H1 (cell line): ENCODE measurements at regions of chr7 and their contacts with region 1.

Region 1: DNA sequence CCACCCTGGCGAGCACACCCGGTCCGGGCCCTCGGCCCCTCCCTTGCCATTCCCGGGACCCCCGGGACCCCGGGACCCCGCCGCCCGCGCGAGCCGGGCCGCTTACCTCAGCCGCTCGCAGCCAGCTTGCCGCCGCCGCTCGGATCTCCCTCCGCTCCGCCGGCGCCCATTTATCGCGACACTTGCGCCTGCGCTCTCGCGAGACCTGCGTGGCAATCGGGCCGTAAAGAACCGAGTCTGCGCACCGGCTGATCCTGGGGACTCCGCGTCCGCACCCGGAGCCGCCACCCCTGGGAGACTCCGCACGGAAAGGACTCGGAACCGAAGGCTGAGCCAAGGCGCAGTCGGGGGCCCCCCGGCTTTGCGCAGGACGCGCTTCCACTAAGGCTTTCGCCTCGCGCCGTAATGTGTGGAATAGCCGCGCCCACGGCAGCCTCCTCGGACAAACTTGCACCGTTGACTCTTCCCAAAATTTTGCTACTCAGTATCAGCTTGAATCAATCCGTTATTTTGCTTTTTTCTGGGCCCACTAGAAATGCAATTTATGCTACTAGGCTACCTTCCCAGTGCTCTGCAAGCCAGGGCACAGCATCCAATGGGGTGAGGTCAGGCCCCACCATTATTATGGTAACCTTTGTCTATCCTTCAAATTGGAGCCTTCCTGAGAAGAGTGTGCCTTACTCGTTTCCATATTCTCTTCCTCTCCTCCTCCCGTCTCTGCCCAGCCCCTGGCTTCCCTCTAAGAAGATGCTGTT is at the start of gene MAD1L1:
- DNase-seq: peak in 1 of 2 experiments; percentile 94
- H3K4me3 ChIP-seq: peak within 1 kb of the TSS; percentile 62 to 93 (median 82)
- H3K27ac ChIP-seq: peak within 1 kb of the TSS; percentile 31; the same call in 1 of the 2 replicates
- H3K4me1 ChIP-seq: peaks cover 0 to 2% (median 0%) of the 10 kb centered on the region in 4 experiments; a peak in 1 of 7 replicates
- H3K27me3 ChIP-seq: no peaks in the 10 kb centered on the region
- CTCF ChIP-seq: no peak
- EP300 ChIP-seq: no peak; a peak in 1 of 3 replicates
- POLR2A ChIP-seq: peak in 1 of 2 experiments; percentile 80; a peak in 2 of 3 replicates
- RAD21 ChIP-seq: no peak
- total RNA-seq, gene MAD1L1: 38.8 and 40.4 TPM in 2 replicates

Region 2: GRCh38 chr7:2258661-2259365 is 25.9 kb after region 1 on chr7:
- CTCF ChIA-PET with region 1: interaction called, 4 read pairs
- POLR2A ChIA-PET with region 1: interaction called, 11 read pairs
- DNase-seq: no peak
- H3K4me3 ChIP-seq: no peak overlapping the region
- H3K27ac ChIP-seq: no peak overlapping the region
- H3K4me1 ChIP-seq: no peaks in the 10 kb centered on the region
- H3K27me3 ChIP-seq: no peaks in the 10 kb centered on the region
- CTCF ChIP-seq: no peak
- EP300 ChIP-seq: no peak
- POLR2A ChIP-seq: no peak
- RAD21 ChIP-seq: no peak